Common myeloid progenitor, CD34-positive (primary cell): ENCODE measurements at regions of chr10 and their contacts with region 1.

Region 1: GRCh38 chr10:26468291-26468690 is 30.1 kb downstream of the APBB1IP start:
- DNase-seq: no peak
- H3K4me3 ChIP-seq: no peak overlapping the region
- H3K27ac ChIP-seq: no peak overlapping the region
- H3K4me1 ChIP-seq: peaks cover 0 to 10% (median 2%) of the 10 kb centered on the region in 4 experiments
- H3K27me3 ChIP-seq: no peaks in the 10 kb centered on the region

Region 2: DNA sequence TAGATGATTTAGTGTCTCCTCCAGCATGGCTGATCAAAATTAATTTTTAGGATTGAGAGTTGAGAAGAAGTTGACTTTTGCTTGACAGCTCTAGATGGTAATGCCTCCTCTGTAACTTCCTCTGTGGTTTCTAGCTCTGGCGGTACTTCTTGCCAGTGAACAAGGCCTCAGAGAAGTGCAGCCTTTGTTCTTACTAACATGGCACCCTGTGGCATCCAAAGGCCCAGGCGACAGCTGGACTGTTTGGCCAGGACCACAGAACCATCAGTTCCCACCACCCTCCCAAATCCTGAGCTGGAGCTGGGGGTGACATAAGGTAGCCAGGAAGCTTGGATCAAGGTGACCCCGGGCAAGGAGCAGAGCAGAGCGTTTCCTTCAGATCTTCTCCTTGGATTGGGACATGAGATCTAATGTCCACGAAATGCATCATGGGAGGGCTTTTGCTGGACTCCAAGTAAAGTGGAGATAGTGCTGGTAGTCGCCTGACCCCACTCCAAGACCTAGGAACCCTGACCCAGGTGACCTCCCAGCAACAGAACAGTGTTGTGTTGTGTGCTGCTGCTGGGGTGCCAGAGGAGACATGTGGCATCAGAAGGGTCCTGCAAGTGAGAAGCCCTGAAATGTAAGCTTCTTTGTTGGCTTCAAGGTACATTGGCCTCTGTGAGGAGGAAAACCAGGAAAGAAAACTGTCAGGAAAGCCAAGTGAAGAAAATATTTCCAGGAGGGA is 11.6 kb after region 1 on chr10:
- CTCF ChIA-PET with region 1: interaction called, 11 read pairs
- POLR2A ChIA-PET with region 1: no interaction called
- DNase-seq: peak; percentile 39 to 87 (median 80)
- H3K4me3 ChIP-seq: peak overlapping the region in 6 of 7 experiments; percentile 6 to 57 (median 33)
- H3K27ac ChIP-seq: peak overlapping the region; percentile 47 to 71
- H3K4me1 ChIP-seq: peaks cover 33 to 73% (median 67%) of the 10 kb centered on the region in 4 experiments
- H3K27me3 ChIP-seq: no peaks in the 10 kb centered on the region